ENCODE measurements at regions of chr2 and their contacts with region 1.

Region 1: DNA sequence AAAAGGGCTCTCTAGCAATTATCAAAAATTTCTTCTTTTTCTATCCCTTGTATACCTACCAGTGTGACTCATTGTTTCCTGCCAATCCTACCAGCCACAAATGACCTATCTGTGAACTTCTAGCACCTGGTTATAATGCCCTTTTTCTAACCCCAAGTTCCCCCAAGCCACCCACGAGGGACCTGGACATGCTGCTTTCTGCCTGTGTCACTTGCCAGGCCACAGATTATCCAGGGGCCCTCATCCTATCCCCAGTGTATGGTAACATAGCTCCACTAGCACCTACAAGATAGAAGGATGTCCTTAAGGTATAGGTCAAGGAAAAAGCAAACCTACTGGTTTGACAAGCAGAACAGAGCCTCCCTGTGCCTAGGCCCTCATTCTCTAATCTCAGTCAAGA is 26.8 kb downstream of the AAK1 start:
- DNase-seq: peak; percentile 24 to 87 (median 36)
- H3K4me3 ChIP-seq: no peak overlapping the region
- H3K4me3 Mint-ChIP-seq: peak overlapping the region in 6 of 8 donors; percentile 51 to 79 (median 72)
- H3K27ac ChIP-seq: peak overlapping the region; percentile 20
- H3K27ac Mint-ChIP-seq: peak overlapping the region in 3 of 7 donors; percentile 67 to 93 (median 88)
- H3K4me1 ChIP-seq: peaks cover 99% of the 10 kb centered on the region
- H3K4me1 Mint-ChIP-seq: peaks cover 2 to 43% (median 39%) of the 10 kb centered on the region in 4 donors
- H3K27me3 ChIP-seq: no peaks in the 10 kb centered on the region
- H3K27me3 Mint-ChIP-seq: no peaks in the 10 kb centered on the region

Region 2: DNA sequence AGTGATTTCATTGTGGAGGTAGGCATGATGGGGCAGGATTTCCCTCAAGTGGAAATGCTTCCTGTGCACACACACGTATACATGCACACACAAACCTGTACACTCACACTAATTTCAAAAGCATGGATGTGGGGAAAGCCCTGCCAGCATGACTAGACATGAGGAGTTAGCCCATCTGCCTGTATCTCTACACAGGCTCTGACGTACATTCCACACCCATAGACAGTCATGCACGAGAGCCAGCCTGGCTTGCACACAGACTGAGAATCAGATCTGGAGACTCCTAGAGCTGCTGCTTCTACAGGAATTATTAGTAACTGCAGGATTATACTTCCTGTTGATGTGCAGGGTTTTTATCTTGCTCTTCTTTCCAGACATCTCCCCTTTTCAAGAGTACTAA is 152.2 kb before region 1 on chr2:
- CTCF ChIA-PET with region 1: no interaction called
- POLR2A ChIA-PET with region 1: no interaction called
- intact Hi-C with region 1: no loop called
- DNase-seq: no peak
- H3K4me3 ChIP-seq: no peak overlapping the region
- H3K4me3 Mint-ChIP-seq: no peak overlapping the region
- H3K27ac ChIP-seq: no peak overlapping the region
- H3K27ac Mint-ChIP-seq: peak overlapping the region in 1 of 7 donors; percentile 22
- H3K4me1 ChIP-seq: no peaks in the 10 kb centered on the region
- H3K4me1 Mint-ChIP-seq: peaks cover 6 to 8% (median 7%) of the 10 kb centered on the region in 4 donors
- H3K27me3 ChIP-seq: no peaks in the 10 kb centered on the region
- H3K27me3 Mint-ChIP-seq: no peaks in the 10 kb centered on the region

Region 3: DNA sequence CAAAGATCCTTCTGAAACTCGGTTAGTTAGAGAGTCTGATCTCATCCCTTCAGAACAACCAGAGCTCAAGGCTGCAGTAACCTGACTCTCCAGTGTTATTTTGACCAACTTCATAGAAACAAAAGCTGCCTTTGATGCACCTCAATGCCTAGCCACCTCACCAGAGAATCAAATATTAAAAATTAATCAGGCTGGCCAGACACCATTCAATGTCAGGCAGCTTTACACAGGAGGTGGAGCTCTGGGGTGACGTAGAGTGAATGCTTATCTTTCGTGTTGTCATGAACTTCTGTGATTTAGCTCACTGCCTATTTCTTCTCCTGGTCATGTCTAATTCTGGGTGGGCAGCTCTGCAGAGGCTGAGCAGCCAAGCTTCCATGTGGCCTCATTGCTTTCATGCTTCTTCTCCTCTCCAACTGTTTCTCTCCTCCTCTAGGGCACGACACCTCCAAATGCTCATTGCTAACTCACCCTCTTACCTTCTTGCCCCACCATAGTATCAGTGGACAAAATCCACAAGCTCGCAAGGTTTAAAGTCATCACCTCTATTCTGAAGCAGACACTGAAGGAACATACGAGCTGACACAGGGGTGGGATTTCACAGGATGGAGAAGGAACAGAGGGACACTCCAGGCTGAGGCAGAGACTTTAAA is 12.6 kb before region 1 on chr2:
- CTCF ChIA-PET with region 1: interaction called, 5 read pairs
- POLR2A ChIA-PET with region 1: interaction called, 5 read pairs
- intact Hi-C with region 1: loop called (anchors 2 kb)
- DNase-seq: no peak
- H3K4me3 ChIP-seq: no peak overlapping the region
- H3K4me3 Mint-ChIP-seq: peak overlapping the region in 6 of 8 donors; percentile 6 to 53 (median 28)
- H3K27ac ChIP-seq: no peak overlapping the region
- H3K27ac Mint-ChIP-seq: peak overlapping the region in 6 of 7 donors; percentile 18 to 85 (median 64)
- H3K4me1 ChIP-seq: peaks cover 94% of the 10 kb centered on the region
- H3K4me1 Mint-ChIP-seq: peaks cover 75 to 95% (median 87%) of the 10 kb centered on the region in 4 donors
- H3K27me3 ChIP-seq: no peaks in the 10 kb centered on the region
- H3K27me3 Mint-ChIP-seq: no peaks in the 10 kb centered on the region

Measured in CD4-positive, alpha-beta memory T cell (primary cell).